Psoas muscle (tissue), 8 donors: ENCODE measurements at regions of chr18 and their contacts with region 1.

Region 1: GRCh38 chr18:74476140-74476539 is 19.0 kb upstream of the DIPK1C start:
- DNase-seq: peak in 1 of 2 donors; percentile 60
- ATAC-seq: no peak
- H3K4me3 ChIP-seq: no peak overlapping the region
- H3K27ac ChIP-seq: no peak overlapping the region
- H3K4me1 ChIP-seq: no peaks in the 10 kb centered on the region
- H3K27me3 ChIP-seq: peaks cover 0 to 9% (median 0%) of the 10 kb centered on the region in 3 donors
- CTCF ChIP-seq: peak; percentile 52

Region 2: GRCh38 chr18:74196220-74197119 is 279.7 kb before region 1 on chr18:
- intact Hi-C with region 1: loop called in 1 of 2 experiments (anchors 10 kb)
- DNase-seq: no peak
- ATAC-seq: peak; percentile 47 to 80 (median 58)
- H3K4me3 ChIP-seq: no peak overlapping the region
- H3K27ac ChIP-seq: no peak overlapping the region
- H3K4me1 ChIP-seq: no peaks in the 10 kb centered on the region
- H3K27me3 ChIP-seq: peaks cover 0 to 4% (median 0%) of the 10 kb centered on the region in 3 donors
- CTCF ChIP-seq: peak; percentile 94

Region 3: GRCh38 chr18:74353169-74353775 is 122.9 kb before region 1 on chr18:
- intact Hi-C with region 1: loop called (anchors 2 to 5 kb)
- DNase-seq: no peak
- ATAC-seq: peak; percentile 51 to 74 (median 52)
- H3K4me3 ChIP-seq: no peak overlapping the region
- H3K27ac ChIP-seq: no peak overlapping the region
- H3K4me1 ChIP-seq: no peaks in the 10 kb centered on the region
- H3K27me3 ChIP-seq: no peaks in the 10 kb centered on the region
- CTCF ChIP-seq: peak; percentile 63

Region 4: DNA sequence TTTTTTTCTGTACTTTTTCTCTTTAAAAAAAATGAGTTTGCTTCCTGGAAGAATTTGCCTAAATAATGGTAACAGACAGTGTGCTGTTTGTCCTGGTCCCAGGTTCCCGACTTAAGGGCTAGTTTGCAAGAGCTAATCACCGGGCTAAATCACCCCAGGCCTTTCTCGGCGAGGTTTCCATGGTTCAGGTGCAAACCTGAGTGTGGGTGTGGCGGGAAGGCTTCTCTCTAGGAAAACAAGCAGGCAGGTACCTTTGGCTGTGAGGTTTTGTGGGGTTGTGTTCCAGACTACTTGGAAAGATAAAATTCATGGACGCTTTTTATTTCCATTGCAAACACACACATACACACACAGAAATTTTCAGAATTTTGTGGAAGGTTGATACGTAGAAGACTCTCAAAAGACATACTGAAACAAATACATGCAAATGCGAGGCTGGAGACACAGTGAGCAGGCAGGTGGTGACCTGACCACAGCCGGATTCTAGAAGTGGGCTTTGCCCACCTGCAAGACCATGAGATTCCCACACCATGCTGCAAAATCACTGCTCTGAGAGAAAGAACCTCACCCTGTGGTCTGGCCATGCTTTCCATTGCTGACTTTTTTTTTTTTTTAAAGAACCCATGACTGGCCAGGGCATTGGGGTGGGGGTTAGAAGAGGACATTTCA is 59.0 kb after region 1 on chr18:
- intact Hi-C with region 1: loop called in 1 of 2 experiments (anchors 10 kb)
- DNase-seq: no peak
- ATAC-seq: no peak
- H3K4me3 ChIP-seq: no peak overlapping the region
- H3K27ac ChIP-seq: no peak overlapping the region
- H3K4me1 ChIP-seq: no peaks in the 10 kb centered on the region
- H3K27me3 ChIP-seq: no peaks in the 10 kb centered on the region
- CTCF ChIP-seq: no peak